A673 (cell line): ENCODE measurements at regions of chr15 and their contacts with region 1.

Region 1: GRCh38 chr15:66386204-66387123 is at the start of gene MAP2K1:
- DNase-seq: peak; percentile 99
- H3K4me3 ChIP-seq: peak within 1 kb of the TSS; percentile 99
- H3K27ac ChIP-seq: peak within 1 kb of the TSS; percentile 87
- H3K4me1 ChIP-seq: peaks cover 9% of the 10 kb centered on the region
- H3K27me3 ChIP-seq: no peaks in the 10 kb centered on the region
- CTCF ChIP-seq: peak; percentile 90
- total RNA-seq, gene MAP2K1: 53.4 and 56.8 TPM in 2 replicates

Region 2: GRCh38 chr15:66433726-66434125 is 47.3 kb after region 1 on chr15:
- CTCF ChIA-PET with region 1: no interaction called
- POLR2A ChIA-PET with region 1: interaction called, 16 read pairs
- intact Hi-C with region 1: no loop called
- DNase-seq: no peak
- H3K4me3 ChIP-seq: no peak overlapping the region
- H3K27ac ChIP-seq: no peak overlapping the region
- H3K4me1 ChIP-seq: peaks cover 6% of the 10 kb centered on the region
- H3K27me3 ChIP-seq: no peaks in the 10 kb centered on the region
- CTCF ChIP-seq: no peak